ENCODE measurements at regions of chr3 and their contacts with region 1.

Region 1: GRCh38 chr3:72375237-72376076 is 472.8 kb downstream of the SHQ1 start:
- DNase-seq: no peak
- H3K4me3 ChIP-seq: no peak overlapping the region
- H3K27ac ChIP-seq: peak overlapping the region in 55 of 59 donors; percentile 1 to 99 (median 94)
- H3K27me3 ChIP-seq: no peaks in the 10 kb centered on the region
- CTCF ChIP-seq: no peak

Region 2: DNA sequence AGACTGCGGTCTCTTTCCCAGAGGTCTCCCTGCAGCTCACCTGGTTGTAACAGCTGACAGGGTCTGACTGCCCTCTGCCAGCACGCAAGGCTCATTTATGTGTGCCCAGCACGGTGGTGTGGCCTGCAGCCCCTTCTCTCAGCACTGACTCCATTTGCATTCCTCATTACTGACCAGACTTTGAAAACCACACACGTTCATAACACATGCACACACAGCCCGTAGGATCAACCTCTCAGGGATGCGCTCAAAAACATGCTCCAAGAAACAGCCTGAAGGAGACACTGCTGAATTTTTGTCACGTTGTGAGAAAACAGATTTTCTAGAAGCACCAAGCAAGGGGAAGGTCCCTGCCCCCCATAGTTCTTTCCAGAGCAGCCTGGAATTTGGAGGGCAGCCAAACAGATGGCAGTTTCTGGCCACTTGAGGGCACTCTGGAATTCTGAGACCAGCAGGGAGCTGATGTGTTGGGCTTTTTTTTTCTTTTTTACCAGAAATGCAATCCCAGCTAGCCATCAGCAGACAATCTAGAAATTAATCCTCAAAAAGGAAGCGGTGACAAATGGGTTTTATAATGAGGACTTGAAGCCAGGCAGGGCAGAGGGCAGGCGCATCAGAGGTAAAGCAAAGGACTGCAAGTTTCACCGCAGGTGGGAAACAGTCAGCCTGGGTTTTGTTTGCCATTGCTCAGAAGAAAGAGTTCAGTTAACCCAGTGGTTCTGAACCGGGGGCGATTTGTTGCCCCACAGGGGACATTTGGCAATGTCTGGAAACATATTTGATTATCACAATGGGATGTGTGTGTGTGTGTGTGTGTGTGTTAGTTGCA is 420.0 kb before region 1 on chr3:
- intact Hi-C with region 1: loop called in 1 of 2 experiments (anchors 10 kb)
- DNase-seq: peak; percentile 66 to 87 (median 84)
- H3K4me3 ChIP-seq: peak overlapping the region in 22 of 59 donors; percentile 3 to 44 (median 20)
- H3K27ac ChIP-seq: peak overlapping the region in 42 of 59 donors; percentile 3 to 86 (median 52)
- H3K27me3 ChIP-seq: no peaks in the 10 kb centered on the region
- CTCF ChIP-seq: peak; percentile 68 to 95 (median 88)

Region 3: GRCh38 chr3:72245183-72245811 is 130.2 kb before region 1 on chr3:
- intact Hi-C with region 1: loop called in 1 of 2 experiments (anchors 5 kb)
- DNase-seq: peak; percentile 55 to 87 (median 77)
- H3K4me3 ChIP-seq: no peak overlapping the region
- H3K27ac ChIP-seq: peak overlapping the region in 57 of 59 donors; percentile 15 to 98 (median 82)
- H3K27me3 ChIP-seq: no peaks in the 10 kb centered on the region
- CTCF ChIP-seq: no peak

Region 4: GRCh38 chr3:72270072-72270681 is 105.3 kb before region 1 on chr3:
- intact Hi-C with region 1: loop called in 1 of 2 experiments (anchors 10 kb)
- DNase-seq: peak in 1 of 10 donors; percentile 31
- H3K4me3 ChIP-seq: no peak overlapping the region
- H3K27ac ChIP-seq: peak overlapping the region in 40 of 59 donors; percentile 0 to 99 (median 90)
- H3K27me3 ChIP-seq: no peaks in the 10 kb centered on the region
- CTCF ChIP-seq: no peak

Region 5: GRCh38 chr3:72288955-72289691 is 86.3 kb before region 1 on chr3:
- intact Hi-C with region 1: loop called in 1 of 2 experiments (anchors 5 kb)
- DNase-seq: peak; percentile 16 to 82 (median 76)
- H3K4me3 ChIP-seq: peak overlapping the region in 58 of 59 donors; percentile 7 to 62 (median 42)
- H3K27ac ChIP-seq: peak overlapping the region in 58 of 59 donors; percentile 18 to 94 (median 82)
- H3K27me3 ChIP-seq: peaks cover 0 to 3% (median 0%) of the 10 kb centered on the region in 45 donors
- CTCF ChIP-seq: peak in 1 of 56 donors; percentile 29

Region 6: DNA sequence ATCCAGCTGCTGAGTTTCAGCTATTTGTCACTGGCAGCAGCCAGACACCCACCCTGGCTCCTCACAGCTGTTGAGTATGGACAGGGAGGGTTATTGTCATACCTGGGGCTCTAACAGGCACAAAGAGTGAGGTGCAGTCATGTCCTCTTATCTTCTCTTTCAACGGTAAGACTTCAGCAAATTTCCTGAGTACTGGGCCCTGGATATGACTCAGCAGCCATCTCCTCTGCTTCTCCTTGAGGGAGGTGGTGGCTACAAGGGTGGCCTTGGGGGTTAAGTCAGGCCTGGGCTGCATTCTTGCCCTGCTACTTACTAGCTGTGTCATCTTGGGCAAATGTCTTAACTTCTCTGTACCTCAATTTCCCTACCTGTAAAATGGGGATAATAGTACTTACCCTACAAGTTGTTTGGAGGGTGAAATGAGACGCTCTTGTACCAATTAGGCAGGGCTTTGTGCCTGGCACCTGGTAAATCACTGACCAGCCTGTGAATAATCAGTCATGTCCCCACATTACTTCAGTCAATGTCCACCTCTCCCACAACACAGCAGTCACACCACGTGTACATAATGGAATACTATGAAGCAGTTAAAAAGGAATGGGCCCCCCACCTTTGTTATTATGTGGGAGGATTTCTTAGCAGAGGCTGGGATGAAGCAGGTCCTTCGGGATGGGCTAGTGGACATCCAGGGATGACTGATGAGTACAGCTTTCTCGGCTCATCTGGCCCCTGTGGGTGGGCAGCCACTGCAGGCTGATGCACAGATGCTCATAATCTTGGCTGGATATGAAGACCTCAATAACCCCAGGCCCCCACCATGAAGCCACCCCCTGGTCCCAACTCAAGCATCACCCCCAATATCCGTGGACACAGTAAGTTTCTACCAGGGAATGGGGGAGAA is 56.0 kb before region 1 on chr3:
- intact Hi-C with region 1: no loop called
- DNase-seq: no peak
- H3K4me3 ChIP-seq: no peak overlapping the region
- H3K27ac ChIP-seq: peak overlapping the region in 2 of 59 donors; percentile 36 to 53
- H3K27me3 ChIP-seq: no peaks in the 10 kb centered on the region
- CTCF ChIP-seq: no peak

Region 7: DNA sequence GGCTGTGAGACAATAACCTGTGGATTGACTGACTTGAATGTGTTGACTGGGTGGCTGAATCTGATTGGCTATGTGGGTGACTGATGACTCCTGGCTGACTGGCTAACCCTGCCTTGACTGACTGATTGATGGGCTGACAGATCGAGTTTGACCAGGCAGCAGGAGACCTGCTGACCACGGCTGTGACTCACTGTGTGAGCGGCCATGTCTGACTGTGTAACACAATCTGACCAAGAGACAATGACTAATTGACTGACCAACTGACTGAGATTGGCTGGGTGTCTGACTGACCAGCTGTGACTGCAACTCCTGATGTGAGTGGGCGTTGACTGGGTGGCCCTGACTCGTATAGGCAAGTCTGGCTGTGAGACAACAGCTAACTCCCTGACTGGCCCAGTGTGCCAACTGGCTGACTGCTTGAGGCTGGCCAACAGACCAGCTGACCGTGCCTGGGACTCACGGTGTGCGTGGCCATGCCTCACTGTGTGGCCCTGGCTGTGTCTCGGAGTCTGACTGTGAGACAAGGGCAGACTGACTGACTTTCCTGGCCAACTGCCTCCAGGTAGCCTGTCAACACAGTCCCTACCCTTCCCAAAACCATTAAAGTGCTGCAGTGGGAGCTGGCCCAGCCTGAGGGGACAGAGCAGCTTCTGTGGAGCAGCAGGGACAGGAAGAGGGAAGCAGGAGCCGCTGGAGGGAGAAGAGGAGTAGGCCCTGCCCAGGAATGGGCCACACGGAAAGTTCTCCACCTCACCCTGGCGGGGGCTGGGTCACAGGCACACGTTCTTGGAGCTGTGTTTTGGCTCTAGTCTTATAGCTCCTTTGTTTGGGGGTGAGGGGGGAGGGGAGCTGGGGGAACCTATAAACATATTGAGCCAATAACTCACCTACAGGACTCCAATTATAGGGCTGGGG is 36.1 kb before region 1 on chr3:
- intact Hi-C with region 1: loop called in 1 of 2 experiments (anchors 5 kb)
- DNase-seq: peak in 4 of 10 donors; percentile 40 to 56 (median 48)
- H3K4me3 ChIP-seq: no peak overlapping the region
- H3K27ac ChIP-seq: peak overlapping the region in 17 of 59 donors; percentile 4 to 75 (median 41)
- H3K27me3 ChIP-seq: no peaks in the 10 kb centered on the region
- CTCF ChIP-seq: no peak

Region 8: DNA sequence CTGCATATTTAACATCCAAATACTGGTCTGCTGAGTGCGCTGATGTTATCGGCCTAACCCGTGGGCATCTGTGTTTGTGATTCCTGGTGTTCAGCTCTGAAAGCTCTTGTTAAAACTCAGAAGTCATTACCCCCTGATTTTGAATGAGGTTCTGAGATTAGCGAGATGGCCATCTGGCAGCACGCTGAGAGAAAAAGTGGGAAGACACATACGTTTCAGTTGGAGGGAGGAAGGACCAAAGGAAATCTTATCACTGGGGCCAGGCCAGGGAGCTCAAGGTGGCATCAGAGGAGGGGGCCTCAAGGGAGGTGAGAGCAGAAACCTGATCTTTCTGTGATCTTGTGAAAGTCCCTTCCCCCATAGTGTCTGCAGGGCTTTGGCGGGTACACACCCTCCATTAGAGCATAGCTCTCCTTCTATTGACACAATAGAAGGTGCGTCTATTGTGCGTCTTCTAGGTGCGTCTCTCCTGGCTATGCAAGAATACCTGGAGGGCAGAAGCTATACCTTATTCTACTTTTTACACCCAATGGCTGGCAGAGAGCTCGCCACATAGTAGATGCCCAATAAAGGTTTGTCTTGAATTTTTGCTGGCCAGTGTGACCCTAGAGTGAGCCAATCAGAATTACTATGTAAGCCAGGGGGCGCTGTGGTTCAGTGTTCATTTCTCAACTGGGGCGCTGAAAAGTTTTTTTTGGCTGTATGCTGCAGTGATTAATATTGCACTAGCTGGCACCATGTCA is 290.4 kb after region 1 on chr3:
- intact Hi-C with region 1: loop called in 1 of 2 experiments (anchors 2 kb)
- DNase-seq: no peak
- H3K4me3 ChIP-seq: no peak overlapping the region
- H3K27ac ChIP-seq: peak overlapping the region in 15 of 59 donors; percentile 2 to 99 (median 97)
- H3K27me3 ChIP-seq: peaks cover 0 to 9% (median 0%) of the 10 kb centered on the region in 45 donors
- CTCF ChIP-seq: peak; percentile 17 to 67 (median 52)

Measured in dorsolateral prefrontal cortex (tissue), 120 donors.